CD8-positive, alpha-beta T cell (primary cell): ENCODE measurements at regions of chr6 and their contacts with region 1.

Region 1: GRCh38 chr6:119110601-119111548 is 32.4 kb upstream of the FAM184A start:
- DNase-seq: peak in 7 of 9 experiments; percentile 13 to 77 (median 48)
- ATAC-seq: peak; percentile 83
- H3K4me3 ChIP-seq: no peak overlapping the region
- H3K4me3 Mint-ChIP-seq: no peak overlapping the region
- H3K27ac ChIP-seq: no peak overlapping the region
- H3K27ac Mint-ChIP-seq: no peak overlapping the region
- H3K4me1 ChIP-seq: no peaks in the 10 kb centered on the region
- H3K4me1 Mint-ChIP-seq: peaks cover 11% of the 10 kb centered on the region
- H3K27me3 ChIP-seq: no peaks in the 10 kb centered on the region
- H3K27me3 Mint-ChIP-seq: no peaks in the 10 kb centered on the region
- CTCF ChIP-seq: peak; percentile 74

Region 2: DNA sequence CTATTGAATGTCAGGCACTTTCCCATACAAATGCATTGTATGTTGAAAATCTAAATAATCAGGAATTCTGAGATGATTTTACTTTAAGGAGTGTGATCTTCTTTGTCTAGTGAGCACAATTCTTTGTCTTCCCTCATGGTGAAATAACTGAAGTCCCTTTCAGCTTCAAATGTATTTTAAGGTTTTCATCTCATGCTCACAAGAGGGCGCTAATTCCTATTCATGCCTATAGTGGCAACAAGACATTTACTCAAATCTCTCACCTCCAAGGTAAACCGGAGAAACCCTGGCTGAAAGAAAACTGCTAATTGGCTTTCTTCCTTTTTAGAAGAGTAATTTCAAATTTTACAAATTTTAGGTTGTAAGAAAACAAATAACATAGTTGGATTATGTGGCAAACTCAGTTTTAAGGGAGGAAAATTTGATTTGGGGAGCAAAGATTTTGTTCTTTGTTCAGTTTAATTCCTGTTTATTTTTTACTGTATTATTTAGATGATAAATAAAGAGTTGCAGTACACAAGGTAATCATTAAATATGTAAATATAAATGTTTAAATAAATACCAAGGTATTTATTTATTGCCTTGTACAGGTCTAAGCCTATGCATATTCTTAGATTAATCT is 1134.7 kb before region 1 on chr6:
- CTCF ChIA-PET with region 1: interaction called, 5 read pairs
- POLR2A ChIA-PET with region 1: no interaction called
- intact Hi-C with region 1: loop called in 1 of 2 experiments (anchors 5 kb)
- DNase-seq: peak in 2 of 9 experiments; percentile 38 to 55
- ATAC-seq: no peak
- H3K4me3 ChIP-seq: no peak overlapping the region
- H3K4me3 Mint-ChIP-seq: no peak overlapping the region
- H3K27ac ChIP-seq: no peak overlapping the region
- H3K27ac Mint-ChIP-seq: no peak overlapping the region
- H3K4me1 ChIP-seq: no peaks in the 10 kb centered on the region
- H3K4me1 Mint-ChIP-seq: no peaks in the 10 kb centered on the region
- H3K27me3 ChIP-seq: no peaks in the 10 kb centered on the region
- H3K27me3 Mint-ChIP-seq: peaks cover 19% of the 10 kb centered on the region
- CTCF ChIP-seq: peak; percentile 56

Region 3: GRCh38 chr6:118618679-118619377 is 492.0 kb before region 1 on chr6:
- CTCF ChIA-PET with region 1: no interaction called
- POLR2A ChIA-PET with region 1: no interaction called
- intact Hi-C with region 1: loop called (anchors 1 to 2 kb)
- DNase-seq: peak; percentile 38 to 81 (median 66)
- ATAC-seq: peak; percentile 96
- H3K4me3 ChIP-seq: no peak overlapping the region
- H3K4me3 Mint-ChIP-seq: no peak overlapping the region
- H3K27ac ChIP-seq: no peak overlapping the region
- H3K27ac Mint-ChIP-seq: peak overlapping the region; percentile 83
- H3K4me1 ChIP-seq: peaks cover 7% of the 10 kb centered on the region
- H3K4me1 Mint-ChIP-seq: peaks cover 64% of the 10 kb centered on the region
- H3K27me3 ChIP-seq: no peaks in the 10 kb centered on the region
- H3K27me3 Mint-ChIP-seq: no peaks in the 10 kb centered on the region
- CTCF ChIP-seq: peak; percentile 79

Region 4: DNA sequence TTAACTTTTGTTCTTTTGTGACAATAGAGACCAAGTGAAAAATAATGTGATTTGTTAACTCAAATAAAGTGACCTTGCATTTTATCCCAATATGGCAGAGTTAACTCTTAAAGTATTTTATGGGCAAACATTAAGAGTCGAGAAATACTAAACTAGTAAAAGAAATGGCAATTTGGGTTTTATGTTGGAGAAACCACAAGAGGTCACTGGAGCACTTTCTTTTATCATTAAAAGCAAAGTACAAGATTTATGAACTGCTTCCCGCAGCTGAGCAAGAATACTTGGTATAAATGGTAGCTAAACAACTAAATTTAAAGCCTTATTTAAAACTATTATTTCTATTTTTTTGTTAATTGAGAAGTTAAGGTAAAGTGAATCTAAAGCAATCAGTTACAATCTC is 142.5 kb before region 1 on chr6:
- CTCF ChIA-PET with region 1: interaction called, 128 read pairs
- POLR2A ChIA-PET with region 1: interaction called, 4 read pairs
- intact Hi-C with region 1: loop called (anchors 1 kb)
- DNase-seq: peak in 2 of 9 experiments; percentile 2 to 17
- ATAC-seq: no peak
- H3K4me3 ChIP-seq: no peak overlapping the region
- H3K4me3 Mint-ChIP-seq: no peak overlapping the region
- H3K27ac ChIP-seq: no peak overlapping the region
- H3K27ac Mint-ChIP-seq: no peak overlapping the region
- H3K4me1 ChIP-seq: no peaks in the 10 kb centered on the region
- H3K4me1 Mint-ChIP-seq: no peaks in the 10 kb centered on the region
- H3K27me3 ChIP-seq: no peaks in the 10 kb centered on the region
- H3K27me3 Mint-ChIP-seq: no peaks in the 10 kb centered on the region
- CTCF ChIP-seq: no peak

Region 5: GRCh38 chr6:119078376-119079282 is 32.2 kb before region 1 on chr6 and contains the start of gene FAM184A:
- CTCF ChIA-PET with region 1: interaction called, 14 read pairs
- POLR2A ChIA-PET with region 1: no interaction called
- intact Hi-C with region 1: loop called in 1 of 2 experiments (anchors 1 kb)
- DNase-seq: peak; percentile 50 to 86 (median 71)
- ATAC-seq: peak; percentile 74
- H3K4me3 ChIP-seq: peak within 1 kb of the TSS; percentile 58 to 66
- H3K4me3 Mint-ChIP-seq: peak within 1 kb of the TSS; percentile 94
- H3K27ac ChIP-seq: peak within 1 kb of the TSS; percentile 34 to 46
- H3K27ac Mint-ChIP-seq: peak within 1 kb of the TSS; percentile 91
- H3K4me1 ChIP-seq: peaks cover 25% of the 10 kb centered on the region
- H3K4me1 Mint-ChIP-seq: peaks cover 32% of the 10 kb centered on the region
- H3K27me3 ChIP-seq: no peaks in the 10 kb centered on the region
- H3K27me3 Mint-ChIP-seq: no peaks in the 10 kb centered on the region
- CTCF ChIP-seq: no peak
- total RNA-seq, gene FAM184A: 0.50 to 0.79 TPM

Region 6: DNA sequence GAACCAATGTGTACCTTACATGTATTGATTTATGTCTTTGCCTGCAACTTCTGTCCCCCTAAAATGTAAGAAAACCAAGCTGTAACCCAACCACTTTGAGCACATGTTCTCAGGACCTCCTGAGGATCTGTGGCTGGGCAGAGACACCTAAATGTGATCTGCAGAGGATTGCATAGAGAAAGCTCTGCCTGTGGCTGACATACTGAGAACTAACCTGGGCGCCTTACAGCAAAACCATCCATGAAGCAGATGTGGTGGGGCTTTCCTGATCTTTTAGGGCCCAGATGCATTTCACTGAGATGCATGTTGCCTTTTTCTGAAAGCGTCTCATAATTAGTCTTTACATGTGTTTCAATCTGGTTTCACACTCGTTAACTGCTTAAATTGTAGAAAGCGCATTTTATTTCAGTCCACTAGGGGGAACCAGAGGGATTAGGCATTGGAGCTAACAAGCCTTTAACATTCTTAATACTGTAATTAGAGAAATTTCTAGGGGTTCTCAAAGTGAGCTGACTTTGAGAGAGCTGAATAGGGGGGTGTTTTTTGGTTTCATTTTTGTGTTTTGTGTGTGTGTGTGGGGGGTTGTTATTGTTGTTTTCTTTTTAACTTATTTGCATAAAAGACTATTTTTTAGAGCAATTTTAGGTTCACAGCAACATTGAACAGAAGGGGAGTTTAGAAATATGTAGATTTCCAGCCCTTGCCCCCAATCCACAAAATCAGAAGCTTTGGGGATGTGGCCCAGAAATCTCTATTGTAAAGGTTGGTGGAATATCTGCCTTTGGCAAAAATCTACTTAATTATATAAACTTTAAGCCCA is 18.5 kb after region 1 on chr6:
- CTCF ChIA-PET with region 1: interaction called, 11 read pairs
- POLR2A ChIA-PET with region 1: no interaction called
- intact Hi-C with region 1: no loop called
- DNase-seq: peak in 3 of 9 experiments; percentile 28 to 76 (median 72)
- ATAC-seq: peak; percentile 72
- H3K4me3 ChIP-seq: no peak overlapping the region
- H3K4me3 Mint-ChIP-seq: no peak overlapping the region
- H3K27ac ChIP-seq: no peak overlapping the region
- H3K27ac Mint-ChIP-seq: no peak overlapping the region
- H3K4me1 ChIP-seq: no peaks in the 10 kb centered on the region
- H3K4me1 Mint-ChIP-seq: peaks cover 3% of the 10 kb centered on the region
- H3K27me3 ChIP-seq: no peaks in the 10 kb centered on the region
- H3K27me3 Mint-ChIP-seq: peaks cover 2% of the 10 kb centered on the region
- CTCF ChIP-seq: peak; percentile 81